Breast epithelium (tissue), 4 donors: ENCODE measurements at regions of chr11 and their contacts with region 1.

Region 1: GRCh38 chr11:8544807-8545206 is 49.2 kb downstream of the STK33 start:
- DNase-seq: no peak
- H3K4me3 ChIP-seq: no peak overlapping the region
- H3K27ac ChIP-seq: no peak overlapping the region
- H3K4me1 ChIP-seq: no peaks in the 10 kb centered on the region
- H3K27me3 ChIP-seq: no peaks in the 10 kb centered on the region
- CTCF ChIP-seq: no peak
- POLR2A ChIP-seq: no peak

Region 2: GRCh38 chr11:8699903-8700302 is 155.1 kb after region 1 on chr11:
- intact Hi-C with region 1: loop called (anchors 5 kb)
- DNase-seq: peak in 1 of 2 donors; percentile 84
- H3K4me3 ChIP-seq: peak overlapping the region in 1 of 3 donors; percentile 17
- H3K27ac ChIP-seq: peak overlapping the region; percentile 94 to 98
- H3K4me1 ChIP-seq: peaks cover 0 to 5% of the 10 kb centered on the region in 2 donors
- H3K27me3 ChIP-seq: no peaks in the 10 kb centered on the region
- CTCF ChIP-seq: no peak
- POLR2A ChIP-seq: no peak